ENCODE measurements at regions of chr2 and their contacts with region 1.

Region 1: DNA sequence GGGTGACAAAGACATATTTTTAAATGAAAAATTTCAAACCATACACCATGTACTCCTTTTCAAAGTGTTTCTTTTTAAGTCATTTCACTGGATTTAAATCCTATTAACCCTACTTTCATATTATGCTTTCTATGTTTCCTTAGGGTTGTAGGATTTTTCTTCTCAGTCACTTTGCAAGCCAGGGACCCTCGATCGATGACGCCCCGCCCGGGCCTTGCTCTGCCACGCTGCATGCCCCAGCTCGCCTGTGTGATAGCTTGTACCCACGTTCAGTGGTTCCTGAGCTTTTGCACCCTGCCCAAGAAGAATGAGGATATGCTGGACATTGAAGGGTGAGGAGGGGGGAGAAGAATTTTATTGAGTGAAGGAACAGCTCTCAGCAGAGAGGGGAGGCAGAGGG is 568.0 kb downstream of the TRIB2 start:
- DNase-seq: no peak
- ATAC-seq: no peak
- H3K4me3 ChIP-seq: no peak overlapping the region
- H3K27ac ChIP-seq: no peak overlapping the region
- H3K4me1 ChIP-seq: no peaks in the 10 kb centered on the region
- H3K27me3 ChIP-seq: no peaks in the 10 kb centered on the region
- CTCF ChIP-seq: no peak
- POLR2A ChIP-seq: no peak

Region 2: DNA sequence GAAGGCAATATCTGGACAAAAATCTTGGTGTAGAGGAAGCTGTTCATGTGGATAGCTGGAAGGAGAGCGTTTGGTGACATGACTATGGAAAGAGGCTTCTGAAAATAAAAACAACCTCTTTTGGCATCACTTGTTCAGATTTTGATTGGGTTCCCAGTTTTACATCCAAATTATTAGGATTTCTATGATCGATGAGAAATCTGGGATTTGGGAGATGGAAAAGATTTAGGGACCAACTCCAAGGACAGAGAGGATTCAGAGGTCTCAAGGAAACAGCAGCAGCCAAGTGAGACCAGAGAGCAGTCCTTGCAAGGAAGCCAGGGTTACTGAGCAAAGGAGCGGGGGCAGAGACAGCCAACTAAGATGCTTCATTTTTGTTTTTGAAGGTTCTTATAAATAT is 126.2 kb before region 1 on chr2:
- intact Hi-C with region 1: no loop called
- DNase-seq: no peak
- ATAC-seq: no peak
- H3K4me3 ChIP-seq: no peak overlapping the region
- H3K27ac ChIP-seq: no peak overlapping the region
- H3K4me1 ChIP-seq: no peaks in the 10 kb centered on the region
- H3K27me3 ChIP-seq: no peaks in the 10 kb centered on the region
- CTCF ChIP-seq: no peak
- POLR2A ChIP-seq: no peak

Region 3: GRCh38 chr2:13252615-13253014 is 32.1 kb before region 1 on chr2:
- intact Hi-C with region 1: loop called in 1 of 10 experiments (anchors 1 kb)
- DNase-seq: no peak
- ATAC-seq: no peak
- H3K4me3 ChIP-seq: no peak overlapping the region
- H3K27ac ChIP-seq: no peak overlapping the region
- H3K4me1 ChIP-seq: no peaks in the 10 kb centered on the region
- H3K27me3 ChIP-seq: no peaks in the 10 kb centered on the region
- CTCF ChIP-seq: no peak
- POLR2A ChIP-seq: no peak

Measured in heart left ventricle (tissue), 16 donors.